Aorta (tissue), 5 donors: ENCODE measurements at regions of chr18 and their contacts with region 1.

Region 1: GRCh38 chr18:61743775-61744531 is 148.9 kb downstream of the RNF152 start:
- DNase-seq: no peak
- ATAC-seq: no peak
- H3K4me3 ChIP-seq: no peak overlapping the region
- H3K27ac ChIP-seq: peak overlapping the region; percentile 41 to 84
- H3K4me1 ChIP-seq: peaks cover 8 to 12% of the 10 kb centered on the region in 2 donors
- H3K27me3 ChIP-seq: no peaks in the 10 kb centered on the region

Region 2: GRCh38 chr18:61702007-61702406 is 41.9 kb before region 1 on chr18:
- intact Hi-C with region 1: loop called (anchors 5 kb)
- DNase-seq: no peak
- ATAC-seq: peak; percentile 76
- H3K4me3 ChIP-seq: no peak overlapping the region
- H3K27ac ChIP-seq: peak overlapping the region; percentile 64 to 84
- H3K4me1 ChIP-seq: peaks cover 0 to 4% of the 10 kb centered on the region in 2 donors
- H3K27me3 ChIP-seq: no peaks in the 10 kb centered on the region

Region 3: GRCh38 chr18:61808286-61808685 is 64.3 kb after region 1 on chr18:
- intact Hi-C with region 1: no loop called
- DNase-seq: no peak
- ATAC-seq: no peak
- H3K4me3 ChIP-seq: no peak overlapping the region
- H3K27ac ChIP-seq: no peak overlapping the region
- H3K4me1 ChIP-seq: no peaks in the 10 kb centered on the region
- H3K27me3 ChIP-seq: no peaks in the 10 kb centered on the region

Region 4: GRCh38 chr18:61833387-61833786 is 89.4 kb after region 1 on chr18:
- intact Hi-C with region 1: loop called (anchors 10 kb)
- DNase-seq: no peak
- ATAC-seq: no peak
- H3K4me3 ChIP-seq: no peak overlapping the region
- H3K27ac ChIP-seq: no peak overlapping the region
- H3K4me1 ChIP-seq: peaks cover 0 to 8% of the 10 kb centered on the region in 2 donors
- H3K27me3 ChIP-seq: no peaks in the 10 kb centered on the region